ENCODE measurements at regions of chr9 and their contacts with region 1.

Region 1: DNA sequence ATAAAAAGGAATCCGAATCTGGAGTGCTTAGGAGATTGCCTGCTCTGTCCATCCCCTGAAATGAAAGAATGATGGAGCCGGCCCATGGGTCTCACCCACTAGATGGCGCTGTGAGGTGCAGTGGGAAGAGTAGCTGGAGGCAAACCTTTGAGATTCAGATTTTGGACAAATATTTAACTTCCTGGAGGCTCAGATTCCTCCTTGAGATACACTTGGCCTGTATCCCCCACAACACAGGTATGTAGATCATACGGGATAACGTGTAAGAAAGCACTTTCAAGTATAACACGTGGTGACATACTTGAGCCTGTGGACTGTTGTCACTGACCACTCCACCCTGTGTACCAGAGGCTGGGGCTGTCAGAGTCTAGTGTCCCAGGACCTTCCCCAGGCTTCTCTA is 32.3 kb downstream of the TRMO start:
- DNase-seq: peak; percentile 22
- H3K4me3 ChIP-seq: no peak overlapping the region
- H3K27ac ChIP-seq: no peak overlapping the region
- H3K4me1 ChIP-seq: no peaks in the 10 kb centered on the region
- H3K27me3 ChIP-seq: peaks cover 8 to 9% of the 10 kb centered on the region in 2 experiments
- CTCF ChIP-seq: peak; percentile 73 to 92
- POLR2A ChIP-seq: no peak

Region 2: DNA sequence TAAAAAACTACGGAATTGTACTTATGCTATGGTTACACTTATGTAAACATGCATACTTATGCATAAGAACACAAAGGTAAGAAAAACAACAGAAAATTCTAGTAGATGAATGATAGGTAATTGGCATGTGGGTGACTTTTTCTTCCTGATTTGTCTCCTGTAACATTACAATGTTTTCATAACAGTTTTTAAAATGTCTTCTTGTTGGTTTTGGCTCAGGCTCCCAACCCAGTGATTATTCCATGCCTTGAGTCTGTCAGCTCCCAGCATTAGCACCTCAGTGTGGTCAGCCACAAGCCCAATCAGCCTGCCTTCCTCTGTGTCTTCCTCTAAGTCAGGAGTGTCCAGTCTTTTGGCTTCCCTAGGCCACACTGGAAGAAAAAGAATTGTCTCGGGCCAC is 44.9 kb before region 1 on chr9:
- CTCF ChIA-PET with region 1: interaction called, 10 read pairs
- POLR2A ChIA-PET with region 1: no interaction called
- dilution Hi-C with region 1: no loop called
- intact Hi-C with region 1: no loop called
- DNase-seq: no peak
- H3K4me3 ChIP-seq: no peak overlapping the region
- H3K27ac ChIP-seq: no peak overlapping the region
- H3K4me1 ChIP-seq: peaks cover 5% of the 10 kb centered on the region
- H3K27me3 ChIP-seq: peaks cover 51 to 77% of the 10 kb centered on the region in 2 experiments
- CTCF ChIP-seq: no peak
- POLR2A ChIP-seq: no peak

Region 3: DNA sequence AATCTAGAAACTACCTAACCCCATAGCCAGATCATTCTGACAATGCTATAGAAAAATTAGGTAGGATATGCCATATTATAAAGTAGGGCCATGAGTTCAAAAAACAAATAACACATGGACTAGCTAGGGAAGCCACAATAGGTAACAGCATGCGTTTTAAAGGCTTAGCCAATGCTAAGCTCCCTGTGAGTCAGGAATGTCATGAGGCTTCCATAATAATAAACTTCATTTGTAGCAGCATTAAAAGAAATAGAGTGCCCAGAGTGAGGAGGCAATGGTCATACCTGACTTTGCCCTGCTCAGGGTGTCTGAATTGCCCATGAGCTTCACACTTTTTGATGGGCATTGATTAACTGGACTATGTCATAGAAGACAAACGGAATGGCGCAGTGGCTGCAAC is 21.2 kb before region 1 on chr9:
- CTCF ChIA-PET with region 1: interaction called, 10 read pairs
- POLR2A ChIA-PET with region 1: no interaction called
- dilution Hi-C with region 1: no loop called
- intact Hi-C with region 1: no loop called
- DNase-seq: no peak
- H3K4me3 ChIP-seq: no peak overlapping the region
- H3K27ac ChIP-seq: no peak overlapping the region
- H3K4me1 ChIP-seq: no peaks in the 10 kb centered on the region
- H3K27me3 ChIP-seq: peaks cover 9 to 15% of the 10 kb centered on the region in 2 experiments
- CTCF ChIP-seq: no peak
- POLR2A ChIP-seq: no peak

Region 4: DNA sequence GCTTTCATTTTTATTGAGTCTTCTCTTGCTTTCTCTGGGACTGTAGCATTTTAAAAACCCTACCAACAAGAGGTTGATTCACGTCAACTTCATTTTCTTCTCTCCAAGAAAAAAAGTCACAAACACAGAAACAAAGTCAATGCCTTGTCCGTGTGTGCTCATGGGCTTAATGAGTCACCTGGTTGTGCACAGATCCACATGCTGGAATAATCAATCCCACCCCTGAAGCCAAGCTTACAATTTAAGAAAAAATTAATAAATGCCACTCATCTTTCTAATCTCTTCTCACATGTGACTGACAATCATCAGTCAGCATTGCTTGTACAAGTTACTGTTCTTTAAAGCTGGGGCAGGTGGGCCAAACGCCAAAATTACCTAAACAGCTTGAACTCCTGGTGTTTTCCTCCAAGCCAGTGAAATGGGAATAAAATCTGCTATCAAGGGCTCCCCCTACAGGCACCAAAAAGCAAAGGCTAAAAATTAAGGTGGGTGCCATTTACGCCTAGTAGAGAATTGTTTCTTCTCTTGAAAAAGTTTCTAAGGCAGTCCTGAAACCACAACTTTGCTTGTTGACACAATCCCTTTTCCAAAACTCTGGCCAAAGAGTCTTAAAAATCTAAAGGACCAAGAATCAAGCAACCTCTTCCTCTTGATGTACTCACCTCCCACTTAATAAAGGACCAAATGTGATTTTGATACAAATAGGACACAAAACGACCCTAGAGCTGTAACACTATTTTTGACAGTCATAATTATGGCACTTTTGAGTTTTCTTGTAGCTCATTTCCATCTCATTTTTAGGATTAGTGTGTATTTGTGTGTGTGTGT is 10.9 kb after region 1 on chr9:
- CTCF ChIA-PET with region 1: interaction called, 128 read pairs
- POLR2A ChIA-PET with region 1: no interaction called
- dilution Hi-C with region 1: no loop called
- intact Hi-C with region 1: no loop called
- DNase-seq: peak; percentile 45
- H3K4me3 ChIP-seq: no peak overlapping the region
- H3K27ac ChIP-seq: no peak overlapping the region
- H3K4me1 ChIP-seq: peaks cover under 1% of the 10 kb centered on the region
- H3K27me3 ChIP-seq: no peaks in the 10 kb centered on the region
- CTCF ChIP-seq: peak; percentile 61 to 69
- POLR2A ChIP-seq: no peak

Region 5: GRCh38 chr9:97906236-97906831 is 16.3 kb after region 1 on chr9:
- CTCF ChIA-PET with region 1: interaction called, 128 read pairs
- POLR2A ChIA-PET with region 1: no interaction called
- dilution Hi-C with region 1: no loop called
- intact Hi-C with region 1: no loop called
- DNase-seq: peak; percentile 61
- H3K4me3 ChIP-seq: no peak overlapping the region
- H3K27ac ChIP-seq: no peak overlapping the region
- H3K4me1 ChIP-seq: peaks cover 7% of the 10 kb centered on the region
- H3K27me3 ChIP-seq: no peaks in the 10 kb centered on the region
- CTCF ChIP-seq: no peak
- POLR2A ChIP-seq: no peak

Region 6: DNA sequence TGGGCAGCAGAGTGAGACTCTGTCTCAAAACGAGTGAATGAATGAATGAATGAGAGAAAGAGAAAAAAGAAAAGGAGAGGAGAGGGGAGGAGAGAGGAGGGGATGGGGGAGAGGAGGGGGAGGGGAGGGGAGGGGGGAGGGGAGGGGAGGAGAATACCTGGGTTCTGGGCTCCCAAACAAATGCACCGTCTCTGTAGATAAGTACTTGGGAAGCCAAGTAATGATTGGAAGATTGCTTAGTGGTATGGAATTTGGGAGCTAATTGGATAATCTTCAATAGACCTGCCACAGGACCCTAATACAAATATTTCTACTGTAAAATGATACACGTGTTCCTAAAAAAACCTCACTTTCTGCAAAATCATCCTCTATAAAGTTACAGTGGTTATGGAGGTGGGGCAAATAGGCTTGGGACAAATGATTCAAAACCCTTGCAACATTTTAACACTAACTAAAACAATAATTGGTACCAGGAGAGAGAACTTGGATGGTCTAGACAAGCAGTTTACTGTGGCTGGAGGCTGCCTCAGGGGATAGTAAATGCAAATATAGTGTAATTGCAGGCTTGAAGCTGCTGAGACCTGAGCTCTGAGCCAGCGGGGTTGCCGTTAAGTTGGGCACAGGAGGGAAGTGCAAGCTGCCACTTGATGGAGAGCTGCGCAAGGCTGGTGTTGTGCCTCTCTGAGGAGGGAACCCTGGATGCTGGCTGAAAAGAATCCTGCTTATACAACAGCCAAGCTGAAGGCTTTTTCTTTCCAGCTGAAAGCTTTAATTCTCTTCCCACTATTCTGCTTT is 44.5 kb after region 1 on chr9:
- CTCF ChIA-PET with region 1: no interaction called
- POLR2A ChIA-PET with region 1: no interaction called
- dilution Hi-C with region 1: no loop called
- intact Hi-C with region 1: no loop called
- DNase-seq: no peak
- H3K4me3 ChIP-seq: no peak overlapping the region
- H3K27ac ChIP-seq: no peak overlapping the region
- H3K4me1 ChIP-seq: no peaks in the 10 kb centered on the region
- H3K27me3 ChIP-seq: peaks cover 37 to 71% of the 10 kb centered on the region in 2 experiments
- CTCF ChIP-seq: no peak
- POLR2A ChIP-seq: no peak